ENCODE measurements at regions of chr6 and their contacts with region 1.

Region 1: GRCh38 chr6:158072083-158072721 is 90.5 kb downstream of the SYNJ2 start:
- DNase-seq: peak; percentile 71
- H3K4me3 Mint-ChIP-seq: no peak overlapping the region
- H3K27ac Mint-ChIP-seq: no peak overlapping the region
- H3K4me1 Mint-ChIP-seq: peaks cover 20% of the 10 kb centered on the region
- H3K27me3 Mint-ChIP-seq: no peaks in the 10 kb centered on the region
- CTCF ChIP-seq: peak; percentile 79

Region 2: DNA sequence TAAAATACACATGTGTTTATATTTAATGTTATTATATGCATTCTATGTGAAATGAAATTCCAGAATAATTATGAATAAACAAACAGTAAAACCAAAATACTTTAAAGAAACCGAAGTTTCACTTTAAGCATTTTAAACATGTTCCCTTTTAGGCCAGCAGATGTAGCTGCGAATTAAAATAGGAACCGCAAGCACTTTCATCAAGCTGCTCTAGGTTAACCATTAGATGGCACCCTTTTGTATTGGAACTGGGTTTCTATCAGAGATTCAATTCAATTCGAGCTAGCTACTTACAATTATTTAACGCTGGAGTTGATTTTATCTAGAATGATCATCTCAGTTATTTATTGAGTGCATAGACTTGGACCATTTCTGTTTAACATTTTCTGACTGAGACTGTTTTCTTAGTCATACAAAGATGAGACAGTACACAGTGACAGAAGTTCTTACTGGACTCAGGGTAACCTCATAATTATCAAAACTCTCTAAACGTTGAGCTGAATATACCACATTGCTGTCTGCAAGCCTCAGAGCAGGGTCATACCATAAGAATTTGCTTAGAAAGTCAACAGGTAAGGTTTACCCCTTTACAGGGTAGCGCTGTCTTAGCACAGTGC is 757.4 kb before region 1 on chr6:
- CTCF ChIA-PET with region 1: interaction called, 5 read pairs
- POLR2A ChIA-PET with region 1: no interaction called
- intact Hi-C with region 1: loop called (anchors 10 kb)
- DNase-seq: peak; percentile 76
- H3K4me3 Mint-ChIP-seq: no peak overlapping the region
- H3K27ac Mint-ChIP-seq: no peak overlapping the region
- H3K4me1 Mint-ChIP-seq: peaks cover 12% of the 10 kb centered on the region
- H3K27me3 Mint-ChIP-seq: no peaks in the 10 kb centered on the region
- CTCF ChIP-seq: peak; percentile 79

Region 3: GRCh38 chr6:157764178-157765033 is 307.8 kb before region 1 on chr6:
- CTCF ChIA-PET with region 1: interaction called, 3 read pairs
- POLR2A ChIA-PET with region 1: no interaction called
- intact Hi-C with region 1: loop called (anchors 2 kb)
- DNase-seq: peak; percentile 98
- H3K4me3 Mint-ChIP-seq: peak overlapping the region; percentile 53
- H3K27ac Mint-ChIP-seq: peak overlapping the region; percentile 92
- H3K4me1 Mint-ChIP-seq: peaks cover 58% of the 10 kb centered on the region
- H3K27me3 Mint-ChIP-seq: no peaks in the 10 kb centered on the region
- CTCF ChIP-seq: no peak

Region 4: GRCh38 chr6:157927011-157927410 is 145.2 kb before region 1 on chr6:
- CTCF ChIA-PET with region 1: interaction called, 11 read pairs
- POLR2A ChIA-PET with region 1: no interaction called
- intact Hi-C with region 1: no loop called
- DNase-seq: no peak
- H3K4me3 Mint-ChIP-seq: no peak overlapping the region
- H3K27ac Mint-ChIP-seq: no peak overlapping the region
- H3K4me1 Mint-ChIP-seq: no peaks in the 10 kb centered on the region
- H3K27me3 Mint-ChIP-seq: no peaks in the 10 kb centered on the region
- CTCF ChIP-seq: no peak

Region 5: GRCh38 chr6:158042245-158042798 is 29.9 kb before region 1 on chr6:
- CTCF ChIA-PET with region 1: interaction called, 8 read pairs
- POLR2A ChIA-PET with region 1: interaction called, 11 read pairs
- intact Hi-C with region 1: no loop called
- DNase-seq: peak; percentile 74
- H3K4me3 Mint-ChIP-seq: peak overlapping the region; percentile 53
- H3K27ac Mint-ChIP-seq: peak overlapping the region; percentile 80
- H3K4me1 Mint-ChIP-seq: peaks cover 45% of the 10 kb centered on the region
- H3K27me3 Mint-ChIP-seq: no peaks in the 10 kb centered on the region
- CTCF ChIP-seq: no peak

Region 6: DNA sequence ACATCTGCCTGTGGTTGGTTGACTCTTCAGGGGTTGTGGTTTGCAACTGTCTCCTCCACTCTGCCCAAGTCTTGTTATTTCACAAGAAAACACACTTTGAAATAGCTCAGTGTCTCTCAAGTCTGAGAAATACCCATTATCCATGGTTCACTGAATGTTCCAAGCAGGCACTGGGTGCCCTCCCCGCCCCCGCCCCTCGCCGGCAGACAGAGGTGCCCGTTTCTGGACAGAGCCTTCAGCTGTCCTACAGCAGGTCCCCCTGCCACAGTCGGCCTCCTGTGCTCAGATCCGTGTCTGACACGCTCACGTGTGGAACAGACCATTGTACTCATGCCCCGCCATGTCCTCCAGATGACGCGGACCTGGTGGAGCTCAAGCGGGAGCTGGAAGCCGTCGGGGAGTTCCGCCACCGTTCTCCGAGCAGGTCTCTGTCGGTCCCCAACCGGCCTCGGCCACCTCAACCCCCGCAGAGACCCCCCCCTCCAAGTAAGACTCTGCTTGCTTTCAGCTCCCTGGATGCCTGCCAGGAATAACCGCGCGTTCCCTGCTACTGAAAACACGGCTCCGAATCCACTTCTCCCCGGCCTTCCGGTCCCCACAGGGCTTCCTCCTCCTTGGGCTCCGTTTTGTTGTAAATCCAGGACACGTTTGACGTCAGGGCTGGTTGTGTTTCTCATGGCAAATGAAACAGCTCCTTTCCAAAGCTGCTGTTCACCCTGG is 14.5 kb after region 1 on chr6:
- CTCF ChIA-PET with region 1: interaction called, 50 read pairs
- POLR2A ChIA-PET with region 1: interaction called, 3 read pairs
- intact Hi-C with region 1: no loop called
- DNase-seq: no peak
- H3K4me3 Mint-ChIP-seq: no peak overlapping the region
- H3K27ac Mint-ChIP-seq: no peak overlapping the region
- H3K4me1 Mint-ChIP-seq: no peaks in the 10 kb centered on the region
- H3K27me3 Mint-ChIP-seq: no peaks in the 10 kb centered on the region
- CTCF ChIP-seq: no peak

Measured in MCF 10A (cell line).